GM12878 (cell line): ENCODE measurements at regions of chr17 and their contacts with region 1.

Region 1: DNA sequence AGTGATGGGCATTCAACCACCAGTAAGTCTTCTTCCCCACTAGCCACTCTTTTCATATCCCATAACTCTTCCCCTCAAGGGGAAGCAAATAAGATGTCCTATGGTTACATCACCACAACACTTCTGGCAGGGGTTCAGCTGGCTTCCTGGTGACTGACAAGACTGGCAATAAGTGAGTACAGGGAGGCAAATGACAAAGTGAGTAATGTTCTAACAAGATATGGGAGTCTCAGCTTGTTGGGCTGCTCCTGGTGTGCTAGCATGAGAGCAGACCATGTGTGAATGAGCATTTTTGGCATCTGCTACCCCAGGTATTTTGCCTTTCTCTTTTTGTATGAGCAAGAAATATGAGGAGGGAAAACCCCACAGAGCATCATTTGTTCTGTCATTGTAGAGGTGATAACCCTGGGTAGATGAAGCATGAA is 9.9 kb downstream of the TMIGD1 start:
- DNase-seq: no peak
- ATAC-seq: peak; percentile 86
- H3K4me3 ChIP-seq: no peak overlapping the region
- H3K27ac ChIP-seq: no peak overlapping the region
- H3K4me1 ChIP-seq: peaks cover 17% of the 10 kb centered on the region
- H3K27me3 ChIP-seq: no peaks in the 10 kb centered on the region; a peak in 1 of 4 replicates
- CTCF ChIP-seq: no peak
- EP300 ChIP-seq: no peak
- POLR2A ChIP-seq: no peak
- RAD21 ChIP-seq: no peak

Region 2: GRCh38 chr17:30308406-30308805 is 15.5 kb before region 1 on chr17:
- CTCF ChIA-PET with region 1: interaction called, 5 read pairs
- POLR2A ChIA-PET with region 1: no interaction called
- RAD21 ChIA-PET with region 1: no interaction called
- SMC1A ChIA-PET with region 1: interaction called, 10 read pairs
- in situ Hi-C with region 1: no loop called
- intact Hi-C with region 1: no loop called
- DNase-seq: no peak
- ATAC-seq: no peak
- H3K4me3 ChIP-seq: no peak overlapping the region
- H3K27ac ChIP-seq: no peak overlapping the region
- H3K4me1 ChIP-seq: no peaks in the 10 kb centered on the region
- H3K27me3 ChIP-seq: no peaks in the 10 kb centered on the region
- CTCF ChIP-seq: no peak
- EP300 ChIP-seq: no peak
- POLR2A ChIP-seq: no peak
- RAD21 ChIP-seq: no peak